ENCODE measurements at regions of chr18 and their contacts with region 1.

Region 1: DNA sequence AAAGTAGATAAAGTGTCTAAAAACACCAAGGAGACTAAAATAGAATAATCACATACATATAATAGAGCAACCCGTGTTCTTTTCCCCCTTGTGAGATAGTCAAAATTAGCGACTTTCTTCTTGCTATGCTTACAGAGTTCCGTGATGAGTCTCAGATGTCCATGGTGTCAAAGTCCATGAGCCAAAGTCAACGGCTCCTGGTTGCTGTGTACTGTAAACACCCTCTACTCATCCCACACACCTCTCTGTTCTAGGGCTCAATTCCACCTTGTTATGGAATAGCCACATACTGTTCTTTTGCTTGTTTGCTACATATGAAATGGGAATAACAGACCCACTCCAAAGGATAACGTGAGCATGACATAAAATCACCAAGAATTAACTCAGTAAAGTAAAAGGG is 52.5 kb downstream of the GAREM1 start:
- DNase-seq: no peak

Region 2: GRCh38 chr18:32346671-32347070 is 71.5 kb before region 1 on chr18:
- intact Hi-C with region 1: loop called in 1 of 2 experiments (anchors 2 kb)
- DNase-seq: no peak

Region 3: DNA sequence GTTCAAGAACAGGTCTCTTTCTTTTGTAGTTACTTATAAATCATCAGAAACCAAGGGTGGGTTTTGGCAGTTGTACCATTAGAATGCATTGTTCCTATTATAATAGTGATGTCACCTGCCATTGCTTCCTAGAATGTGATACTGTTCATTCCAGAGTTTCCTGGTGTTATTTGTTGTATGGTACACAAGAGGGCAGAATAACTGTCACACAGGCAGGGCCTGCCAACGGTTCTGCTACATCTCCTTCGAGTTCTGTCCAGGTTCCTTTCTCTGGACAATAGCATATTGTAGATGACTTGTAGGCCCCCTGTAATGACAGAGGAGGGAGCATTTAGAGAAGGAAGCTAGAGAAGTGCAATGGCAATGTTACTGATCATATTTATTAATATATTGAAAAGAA is 256.3 kb after region 1 on chr18:
- intact Hi-C with region 1: no loop called
- DNase-seq: no peak